Spleen (tissue), 13 donors: ENCODE measurements at regions of chr2 and their contacts with region 1.

Region 1: DNA sequence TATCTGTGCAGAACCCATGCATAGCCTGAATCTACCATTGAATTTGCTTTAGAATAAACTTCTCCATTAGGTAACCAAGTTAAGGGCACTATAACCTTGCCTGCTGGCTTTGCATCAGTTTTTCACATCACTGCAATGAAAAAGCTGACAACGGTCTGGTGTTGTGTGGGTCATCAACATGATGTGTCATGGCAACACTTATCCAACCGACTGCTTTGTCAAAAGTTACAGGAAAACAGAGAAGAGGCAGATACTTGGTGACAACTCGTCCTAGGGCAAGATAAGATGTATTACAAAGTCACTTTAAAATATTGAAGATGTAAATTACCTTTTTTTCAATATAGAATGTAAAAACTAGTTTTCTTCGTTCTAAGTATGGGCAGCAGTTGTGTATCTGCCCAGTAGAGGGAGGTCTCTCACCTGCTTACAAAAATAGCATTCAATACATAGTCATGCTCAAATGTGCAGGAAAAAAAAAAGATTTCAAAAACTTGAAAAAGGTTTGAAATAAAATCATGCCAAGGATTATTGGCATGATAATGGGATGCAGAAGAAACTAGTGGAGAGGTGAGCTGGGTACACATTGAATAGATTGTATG is 96.3 kb downstream of the EVA1A start:
- DNase-seq: no peak
- H3K4me3 ChIP-seq: no peak overlapping the region
- H3K27ac ChIP-seq: no peak overlapping the region
- H3K4me1 ChIP-seq: no peaks in the 10 kb centered on the region
- H3K27me3 ChIP-seq: peaks cover 0 to 24% (median 0%) of the 10 kb centered on the region in 7 donors
- CTCF ChIP-seq: peak in 9 of 11 experiments; percentile 18 to 62 (median 51)
- POLR2A ChIP-seq: no peak

Region 2: DNA sequence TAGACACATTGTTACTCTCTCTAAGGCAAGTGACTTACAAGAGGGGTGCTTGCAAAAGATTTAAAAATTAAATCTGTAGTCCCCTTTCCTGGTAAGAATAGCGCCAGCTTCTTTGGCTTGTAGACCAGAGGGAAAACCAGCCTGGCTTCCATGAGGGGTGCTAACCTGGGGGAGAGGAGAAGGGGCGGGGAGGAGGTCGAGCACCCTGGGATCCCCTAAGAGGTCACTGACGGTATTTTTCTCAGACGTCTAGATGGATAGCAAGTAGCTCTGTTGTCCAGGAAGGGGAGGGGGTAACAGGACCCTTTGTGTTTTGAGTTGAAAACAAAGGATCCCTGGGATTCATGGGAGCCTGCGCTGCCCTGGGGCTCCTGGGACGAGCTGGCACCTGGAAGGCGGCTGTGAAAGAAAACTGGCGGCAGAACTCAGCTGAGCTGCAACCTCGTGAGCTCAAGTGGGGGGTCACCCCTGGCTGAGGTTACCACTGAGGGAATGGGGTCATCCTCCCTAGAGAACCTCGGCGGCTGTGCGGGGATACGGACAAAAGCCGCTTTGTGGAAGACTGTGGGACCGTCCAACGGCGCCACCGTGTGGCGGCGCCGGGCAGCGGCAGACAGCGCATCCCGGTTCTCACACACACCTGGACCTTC is 144.4 kb after region 1 on chr2:
- intact Hi-C with region 1: loop called (anchors 5 kb)
- DNase-seq: peak; percentile 87
- H3K4me3 ChIP-seq: peak overlapping the region in 2 of 8 donors; percentile 16 to 47
- H3K27ac ChIP-seq: peak overlapping the region in 7 of 8 donors; percentile 26 to 67 (median 56)
- H3K4me1 ChIP-seq: peaks cover 0 to 9% (median 7%) of the 10 kb centered on the region in 6 donors
- H3K27me3 ChIP-seq: peaks cover 0 to 58% (median 12%) of the 10 kb centered on the region in 7 donors
- CTCF ChIP-seq: peak; percentile 39 to 92 (median 83)
- POLR2A ChIP-seq: no peak

Region 3: GRCh38 chr2:76075126-76075525 is 610.7 kb after region 1 on chr2:
- intact Hi-C with region 1: no loop called
- DNase-seq: no peak
- H3K4me3 ChIP-seq: no peak overlapping the region
- H3K27ac ChIP-seq: no peak overlapping the region
- H3K4me1 ChIP-seq: no peaks in the 10 kb centered on the region
- H3K27me3 ChIP-seq: no peaks in the 10 kb centered on the region
- CTCF ChIP-seq: no peak
- POLR2A ChIP-seq: no peak